Natural killer cell (primary cell): ENCODE measurements at regions of chr3 and their contacts with region 1.

Region 1: DNA sequence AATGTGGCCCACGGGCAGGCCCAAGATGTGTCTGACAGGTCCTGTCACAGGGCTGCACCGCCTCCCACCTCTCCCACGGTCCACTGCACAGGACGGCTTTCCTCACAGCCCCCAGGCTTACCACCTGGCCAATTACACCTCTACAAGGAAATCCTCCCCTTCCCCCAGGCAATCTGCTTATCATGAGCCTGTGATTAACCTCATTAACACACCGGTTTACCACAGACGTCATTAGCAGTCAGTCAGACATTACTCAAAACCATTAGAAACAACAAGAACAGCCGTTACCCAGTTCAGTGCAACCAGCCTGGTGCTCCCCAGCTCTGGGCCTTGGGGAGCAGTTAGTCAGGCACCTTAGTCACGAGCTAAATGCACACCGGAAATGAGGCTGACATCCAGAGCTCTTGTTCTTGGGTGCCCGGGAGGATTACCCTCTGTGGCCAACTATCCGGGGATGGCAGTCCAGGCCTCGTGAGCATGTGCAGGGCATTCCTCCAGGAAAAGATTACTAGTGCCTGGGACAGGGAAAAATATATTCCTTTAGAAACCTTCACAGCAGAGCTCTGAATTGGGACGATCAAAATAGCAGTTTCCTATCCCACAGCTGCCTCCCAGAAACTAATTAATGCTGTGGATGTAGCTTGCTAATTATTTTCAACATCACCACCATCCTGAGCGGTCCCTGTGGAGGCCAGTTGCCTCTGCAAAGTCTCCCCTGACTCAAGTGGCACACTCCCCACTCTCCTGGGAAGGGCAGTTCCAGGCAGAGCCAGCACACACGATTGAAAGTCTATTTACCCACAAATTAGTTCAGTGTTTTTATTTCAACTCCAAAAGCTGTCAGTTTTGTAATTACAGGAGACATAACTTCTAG is 117.4 kb upstream of the ZBED2 start:
- DNase-seq: peak; percentile 54 to 60
- ATAC-seq: peak; percentile 40 to 87 (median 68)
- H3K4me3 ChIP-seq: no peak overlapping the region
- H3K4me3 Mint-ChIP-seq: no peak overlapping the region
- H3K27ac ChIP-seq: peak overlapping the region; percentile 11
- H3K27ac Mint-ChIP-seq: peak overlapping the region; percentile 58 to 91
- H3K4me1 ChIP-seq: peaks cover 4% of the 10 kb centered on the region
- H3K4me1 Mint-ChIP-seq: peaks cover 38 to 47% of the 10 kb centered on the region in 2 donors
- H3K27me3 ChIP-seq: no peaks in the 10 kb centered on the region
- H3K27me3 Mint-ChIP-seq: no peaks in the 10 kb centered on the region
- CTCF ChIP-seq: no peak

Region 2: DNA sequence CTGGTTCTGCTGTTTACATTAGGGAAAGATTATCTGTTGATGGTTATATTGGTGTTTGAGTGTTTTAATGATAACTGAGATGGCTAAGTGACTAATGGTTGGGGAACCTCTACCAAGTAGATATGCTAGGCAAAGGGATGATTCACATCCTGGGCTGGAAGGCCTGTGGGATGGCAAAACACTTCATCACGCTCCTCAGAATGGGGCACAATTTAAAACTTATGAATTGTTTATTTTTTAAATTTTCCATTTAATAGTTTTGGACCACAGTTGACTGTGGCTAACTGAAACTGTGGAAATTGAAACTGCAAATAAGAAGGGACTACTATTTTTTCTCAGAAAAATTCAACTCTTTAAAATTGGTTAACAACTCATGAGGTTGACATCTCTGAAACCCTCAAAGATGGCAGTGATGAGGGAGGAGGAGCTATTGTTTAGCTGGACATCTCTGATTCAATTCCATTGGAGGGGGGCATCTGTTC is 16.9 kb before region 1 on chr3:
- intact Hi-C with region 1: loop called (anchors 2 kb)
- DNase-seq: peak in 1 of 2 donors; percentile 24
- ATAC-seq: peak; percentile 73 to 87 (median 84)
- H3K4me3 ChIP-seq: no peak overlapping the region
- H3K4me3 Mint-ChIP-seq: peak overlapping the region; percentile 57
- H3K27ac ChIP-seq: peak overlapping the region; percentile 34
- H3K27ac Mint-ChIP-seq: peak overlapping the region; percentile 76 to 93
- H3K4me1 ChIP-seq: peaks cover 17% of the 10 kb centered on the region
- H3K4me1 Mint-ChIP-seq: peaks cover 44 to 69% of the 10 kb centered on the region in 2 donors
- H3K27me3 ChIP-seq: no peaks in the 10 kb centered on the region
- H3K27me3 Mint-ChIP-seq: no peaks in the 10 kb centered on the region
- CTCF ChIP-seq: no peak